Right ventricle myocardium inferior (tissue), 1 donor: ENCODE measurements at regions of chr1 and their contacts with region 1.

Region 1: GRCh38 chr1:201828820-201829774 is at the start of gene IPO9:
- DNase-seq: peak; percentile 96
- ATAC-seq: peak; percentile 94
- total RNA-seq, gene IPO9: 22.6 TPM

Region 2: GRCh38 chr1:201877877-201878401 is 48.8 kb after region 1 on chr1:
- intact Hi-C with region 1: loop called (anchors 5 kb)
- DNase-seq: no peak
- ATAC-seq: peak; percentile 57